Posterior cingulate gyrus (tissue), 11 donors: ENCODE measurements at regions of chr14 and their contacts with region 1.

Region 1: DNA sequence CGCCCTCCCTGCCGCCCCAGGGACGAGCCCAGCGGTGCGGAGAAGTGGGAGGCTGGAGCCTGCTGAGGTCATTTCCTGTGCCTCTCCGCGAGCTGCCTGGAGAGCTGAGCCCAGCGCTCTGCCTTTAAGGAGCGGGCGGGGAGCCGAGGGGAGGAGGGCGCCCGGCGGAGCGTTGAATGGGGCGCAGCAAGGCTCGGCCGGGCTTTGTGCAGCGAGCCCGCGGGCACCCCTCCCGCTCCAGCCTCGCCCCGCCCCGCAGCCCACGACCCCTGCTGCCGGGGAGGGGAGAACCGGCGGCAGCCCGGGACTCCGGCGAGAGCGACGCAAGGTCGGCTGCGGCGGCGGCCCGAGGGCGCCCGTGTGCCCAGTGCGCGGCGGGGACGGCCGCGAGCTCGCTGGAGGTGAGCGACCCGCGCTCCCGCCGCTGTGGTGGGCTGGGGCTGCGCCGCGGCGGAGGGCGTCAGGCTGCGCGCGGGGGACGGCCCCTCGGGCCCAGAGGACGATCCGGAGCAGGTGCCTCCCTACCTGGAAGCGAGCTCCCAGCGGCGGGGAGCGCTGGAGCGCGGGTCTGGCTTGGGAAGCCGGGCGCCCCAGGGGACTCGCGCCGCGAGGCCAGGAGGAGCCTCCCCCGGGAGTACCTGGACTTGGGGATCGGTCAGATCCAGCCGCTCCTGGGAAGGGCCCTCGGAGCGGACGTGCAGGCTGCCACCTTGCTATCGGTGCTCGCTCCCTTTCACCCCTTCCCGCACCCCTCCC is at the start of gene PLEKHH1:
- DNase-seq: peak; percentile 85 to 99 (median 90)

Region 2: GRCh38 chr14:65961004-65961403 is 1572.2 kb before region 1 on chr14:
- intact Hi-C with region 1: no loop called
- DNase-seq: peak in 6 of 10 donors; percentile 17 to 78 (median 36)

Region 3: DNA sequence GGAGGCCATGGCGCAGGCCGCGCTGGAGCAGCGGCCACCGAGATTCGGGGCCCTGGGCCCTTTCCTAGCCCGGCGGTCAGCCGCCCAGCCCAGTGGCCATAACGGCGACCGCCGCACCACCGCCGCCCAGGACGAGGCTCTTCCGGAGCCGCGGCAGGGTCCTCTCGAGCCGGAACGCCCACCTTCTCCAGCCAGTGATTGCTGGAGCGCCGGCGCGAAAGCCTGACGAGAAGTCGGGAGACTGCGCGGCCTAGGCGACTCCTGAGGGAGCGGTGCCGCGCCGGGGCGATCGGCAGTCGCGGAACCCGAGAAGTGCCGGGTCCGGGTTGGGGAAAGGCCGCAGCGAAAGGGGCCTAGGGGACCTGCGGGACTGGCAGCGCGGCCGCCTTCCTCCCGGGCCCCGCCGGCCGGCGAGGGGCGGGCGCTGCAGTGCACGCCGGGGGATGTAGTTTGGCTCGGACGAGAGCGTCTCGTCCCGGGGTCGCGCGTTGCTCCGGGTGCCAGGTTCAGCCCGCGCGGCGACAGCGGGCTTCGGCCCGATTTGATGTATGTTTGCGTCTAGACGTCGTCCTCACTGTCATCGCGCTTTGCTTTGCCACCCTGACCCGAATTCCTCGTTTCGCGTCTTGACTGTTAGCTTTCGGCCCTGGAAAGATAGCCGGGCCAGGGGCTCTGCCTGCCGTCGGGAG is 141.4 kb after region 1 on chr14 and contains the start of gene VTI1B:
- intact Hi-C with region 1: loop called (anchors 5 kb)
- DNase-seq: peak; percentile 73 to 96 (median 78)

Region 4: GRCh38 chr14:67722293-67722692 is 189.1 kb after region 1 on chr14:
- intact Hi-C with region 1: no loop called
- DNase-seq: peak; percentile 32 to 94 (median 63)